ENCODE measurements at regions of chr15 and their contacts with region 1.

Region 1: GRCh38 chr15:100572362-100572983 is 29.5 kb downstream of the LINS1 start:
- DNase-seq: no peak
- H3K4me3 ChIP-seq: no peak overlapping the region
- H3K27ac ChIP-seq: no peak overlapping the region
- H3K27me3 ChIP-seq: no peaks in the 10 kb centered on the region
- CTCF ChIP-seq: peak; percentile 38

Region 2: GRCh38 chr15:99928429-99928981 is 644.0 kb before region 1 on chr15:
- CTCF ChIA-PET with region 1: interaction called, 10 read pairs
- POLR2A ChIA-PET with region 1: no interaction called
- DNase-seq: peak; percentile 18
- H3K4me3 ChIP-seq: peak overlapping the region; percentile 58
- H3K27ac ChIP-seq: no peak overlapping the region
- H3K27me3 ChIP-seq: peaks cover 3% of the 10 kb centered on the region
- CTCF ChIP-seq: peak; percentile 53

Region 3: DNA sequence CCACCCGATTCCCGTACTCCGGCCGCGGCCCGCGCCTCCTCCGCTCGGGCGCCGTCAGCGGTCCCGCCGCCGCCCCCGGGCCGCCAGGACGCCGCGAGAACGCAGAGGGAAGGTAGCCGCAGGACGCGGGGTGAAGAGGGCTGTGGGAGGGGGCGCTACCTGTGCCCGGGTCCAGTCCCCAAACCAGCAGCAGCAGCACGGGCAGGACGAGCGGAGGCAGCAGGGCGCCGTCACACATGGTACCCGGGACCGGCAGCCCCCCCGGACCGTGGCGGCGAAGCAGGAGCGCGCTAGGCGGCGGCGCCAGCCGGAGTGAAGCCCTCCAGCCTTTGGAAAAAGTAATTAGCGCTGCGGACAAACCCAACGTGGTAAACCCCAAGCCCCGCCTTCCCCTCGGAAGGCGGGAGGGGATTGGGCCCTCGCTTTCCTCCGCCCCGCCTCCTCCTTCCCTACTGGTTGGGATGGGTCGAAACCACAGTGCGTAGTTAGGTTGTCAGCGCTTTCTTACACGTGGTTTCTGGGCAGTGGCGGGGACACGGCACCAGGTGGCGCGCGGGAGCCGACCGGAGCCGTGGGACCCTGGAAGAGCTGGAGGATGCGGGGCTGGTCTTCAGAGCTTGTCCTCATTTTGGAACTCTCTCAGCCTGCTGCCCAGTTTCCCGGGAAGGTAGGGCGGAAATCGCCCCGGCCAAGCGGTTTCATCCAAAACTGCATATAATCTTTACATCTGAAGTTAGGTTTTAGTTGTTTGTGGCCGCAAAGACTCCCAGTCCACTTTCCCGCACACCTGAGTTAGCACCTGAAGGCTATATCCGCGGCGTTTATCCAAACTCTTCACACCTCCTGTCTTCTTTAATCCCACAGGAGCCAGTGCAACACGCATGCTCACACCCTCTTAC is 230.6 kb before region 1 on chr15 and contains the start of gene ADAMTS17:
- CTCF ChIA-PET with region 1: interaction called, 20 read pairs
- POLR2A ChIA-PET with region 1: no interaction called
- DNase-seq: no peak
- H3K4me3 ChIP-seq: no peak within 1 kb of the TSS
- H3K27ac ChIP-seq: no peak within 1 kb of the TSS
- H3K27me3 ChIP-seq: peaks cover 9% of the 10 kb centered on the region
- CTCF ChIP-seq: peak; percentile 59
- polyA plus RNA-seq, gene ADAMTS17: 0.05 and 0.06 TPM in 2 replicates

Region 4: GRCh38 chr15:100349696-100350433 is 222.6 kb before region 1 on chr15:
- CTCF ChIA-PET with region 1: interaction called, 85 read pairs
- POLR2A ChIA-PET with region 1: no interaction called
- DNase-seq: peak; percentile 38
- H3K4me3 ChIP-seq: peak overlapping the region; percentile 61
- H3K27ac ChIP-seq: no peak overlapping the region
- H3K27me3 ChIP-seq: no peaks in the 10 kb centered on the region
- CTCF ChIP-seq: peak; percentile 77

Region 5: GRCh38 chr15:100373120-100373896 is 199.2 kb before region 1 on chr15:
- CTCF ChIA-PET with region 1: no interaction called
- POLR2A ChIA-PET with region 1: no interaction called
- DNase-seq: no peak
- H3K4me3 ChIP-seq: no peak overlapping the region
- H3K27ac ChIP-seq: no peak overlapping the region
- H3K27me3 ChIP-seq: no peaks in the 10 kb centered on the region
- CTCF ChIP-seq: no peak

Region 6: GRCh38 chr15:100531823-100532327 is 40.6 kb before region 1 on chr15:
- CTCF ChIA-PET with region 1: no interaction called
- POLR2A ChIA-PET with region 1: no interaction called
- DNase-seq: no peak
- H3K4me3 ChIP-seq: no peak overlapping the region
- H3K27ac ChIP-seq: no peak overlapping the region
- H3K27me3 ChIP-seq: peaks cover 2% of the 10 kb centered on the region
- CTCF ChIP-seq: no peak

Region 7: DNA sequence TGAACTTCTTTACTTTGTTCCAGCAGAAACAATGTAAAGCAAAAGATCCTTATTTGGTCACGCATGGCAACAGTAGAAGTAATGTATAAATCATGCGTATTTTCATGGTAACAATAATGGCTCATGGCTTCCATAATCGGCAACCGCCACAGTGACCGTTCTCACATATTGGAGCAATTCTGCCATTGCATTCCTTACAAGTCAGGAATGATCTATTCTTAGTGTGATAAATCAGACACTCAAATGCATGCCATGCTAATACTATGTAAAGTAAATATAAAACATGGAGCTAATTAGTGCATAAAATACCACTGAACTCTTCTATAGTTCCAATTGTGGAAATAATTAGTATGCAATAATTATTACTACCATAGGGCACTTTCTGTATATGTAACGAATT is 30.2 kb before region 1 on chr15:
- CTCF ChIA-PET with region 1: no interaction called
- POLR2A ChIA-PET with region 1: no interaction called
- DNase-seq: no peak
- H3K4me3 ChIP-seq: no peak overlapping the region
- H3K27ac ChIP-seq: no peak overlapping the region
- H3K27me3 ChIP-seq: no peaks in the 10 kb centered on the region
- CTCF ChIP-seq: no peak

Region 8: DNA sequence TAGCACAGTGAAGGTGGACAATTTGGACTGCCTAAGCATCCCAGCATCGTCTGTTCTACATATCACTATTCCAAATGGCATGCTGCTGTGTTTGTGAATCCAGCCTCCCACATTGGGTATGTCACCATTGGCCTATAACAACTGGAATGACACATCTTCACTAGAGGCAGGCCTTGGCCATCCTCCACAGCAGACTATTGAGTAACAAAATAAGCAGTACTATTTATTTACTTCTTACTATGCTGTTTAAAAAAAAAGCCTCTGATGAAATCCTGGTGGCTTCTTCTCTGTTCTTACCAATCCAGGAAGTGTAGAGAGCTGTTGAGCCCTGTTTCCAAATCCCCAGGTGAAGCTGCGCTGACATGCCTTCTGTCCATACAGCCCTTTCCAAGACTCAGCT is 13.1 kb before region 1 on chr15:
- CTCF ChIA-PET with region 1: interaction called, 13 read pairs
- POLR2A ChIA-PET with region 1: interaction called, 3 read pairs
- DNase-seq: peak; percentile 49
- H3K4me3 ChIP-seq: no peak overlapping the region
- H3K27ac ChIP-seq: no peak overlapping the region
- H3K27me3 ChIP-seq: no peaks in the 10 kb centered on the region
- CTCF ChIP-seq: no peak

Region 9: DNA sequence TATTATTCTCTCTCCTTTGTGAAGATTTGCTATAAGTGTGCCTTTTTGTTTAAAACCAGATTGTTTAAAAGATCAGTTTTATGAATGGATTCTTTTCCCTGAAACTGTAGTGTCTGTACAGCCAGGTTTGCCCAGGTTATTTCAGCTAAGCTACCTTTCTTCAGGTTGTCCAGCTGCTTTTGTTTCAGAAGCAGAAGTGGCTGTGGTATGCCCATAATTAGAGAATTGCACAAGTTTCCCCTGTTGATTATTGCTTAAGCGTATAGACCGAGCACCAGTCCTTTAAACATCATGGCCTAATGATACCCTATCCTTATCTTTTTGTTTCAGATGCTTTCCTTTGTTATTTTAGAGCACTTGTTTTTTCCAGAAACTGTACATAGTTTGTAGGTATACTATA is 40.1 kb after region 1 on chr15:
- CTCF ChIA-PET with region 1: no interaction called
- POLR2A ChIA-PET with region 1: no interaction called
- DNase-seq: no peak
- H3K4me3 ChIP-seq: no peak overlapping the region
- H3K27ac ChIP-seq: no peak overlapping the region
- H3K27me3 ChIP-seq: no peaks in the 10 kb centered on the region
- CTCF ChIP-seq: no peak

Measured in AG04450 (cell line).